CD8-positive, alpha-beta T cell (primary cell): ENCODE measurements at regions of chr19 and their contacts with region 1.

Region 1: DNA sequence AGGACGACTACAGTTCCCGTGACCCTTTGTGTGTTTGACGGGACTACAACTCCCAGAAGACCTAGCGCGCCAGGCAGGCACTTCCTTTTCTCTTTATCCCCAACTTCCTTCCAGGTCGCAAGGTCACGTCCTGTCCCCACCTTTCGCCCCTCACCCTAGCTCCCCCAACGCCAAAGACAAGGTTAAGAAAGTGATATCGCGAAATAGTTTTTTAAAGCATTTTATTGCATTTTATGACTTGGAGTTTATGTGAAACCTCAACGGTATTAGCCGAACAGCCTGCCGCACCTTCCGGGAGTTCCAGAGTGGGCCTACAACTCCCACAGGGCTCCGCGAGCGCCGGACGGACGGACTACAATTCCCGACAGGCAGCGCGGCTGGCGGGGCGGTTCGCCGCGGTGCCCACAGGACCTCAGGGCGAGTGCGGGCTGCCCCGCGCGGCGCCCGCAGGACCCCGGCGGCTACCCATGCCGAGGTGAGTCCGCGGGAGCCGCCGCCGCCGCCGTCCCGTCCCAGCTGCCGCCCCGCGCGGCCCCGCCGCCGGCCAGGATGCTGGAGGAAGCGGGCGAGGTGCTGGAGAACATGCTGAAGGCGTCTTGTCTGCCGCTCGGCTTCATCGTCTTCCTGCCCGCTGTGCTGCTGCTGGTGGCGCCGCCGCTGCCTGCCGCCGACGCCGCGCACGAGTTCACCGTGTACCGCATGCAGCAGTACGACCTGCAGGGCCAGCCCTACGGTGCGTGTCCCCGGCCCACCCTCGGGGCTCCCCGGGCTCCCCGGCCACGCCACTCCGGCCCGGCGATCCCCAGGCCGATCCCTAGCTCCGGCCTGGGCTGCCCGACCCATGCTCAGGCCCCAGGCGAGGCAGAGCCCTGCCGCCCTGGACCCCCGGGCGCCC is at the start of gene NCLN:
- DNase-seq: peak; percentile 91 to 98 (median 94)
- ATAC-seq: peak; percentile 84
- H3K4me3 ChIP-seq: peak within 1 kb of the TSS; percentile 66 to 76
- H3K4me3 Mint-ChIP-seq: peak within 1 kb of the TSS; percentile 92
- H3K27ac ChIP-seq: peak within 1 kb of the TSS; percentile 34 to 84
- H3K27ac Mint-ChIP-seq: peak within 1 kb of the TSS; percentile 89
- H3K4me1 ChIP-seq: peaks cover 67% of the 10 kb centered on the region
- H3K4me1 Mint-ChIP-seq: peaks cover 61% of the 10 kb centered on the region
- H3K27me3 ChIP-seq: no peaks in the 10 kb centered on the region
- H3K27me3 Mint-ChIP-seq: no peaks in the 10 kb centered on the region
- CTCF ChIP-seq: no peak
- total RNA-seq, gene NCLN: 47.3 to 55.7 TPM

Region 2: DNA sequence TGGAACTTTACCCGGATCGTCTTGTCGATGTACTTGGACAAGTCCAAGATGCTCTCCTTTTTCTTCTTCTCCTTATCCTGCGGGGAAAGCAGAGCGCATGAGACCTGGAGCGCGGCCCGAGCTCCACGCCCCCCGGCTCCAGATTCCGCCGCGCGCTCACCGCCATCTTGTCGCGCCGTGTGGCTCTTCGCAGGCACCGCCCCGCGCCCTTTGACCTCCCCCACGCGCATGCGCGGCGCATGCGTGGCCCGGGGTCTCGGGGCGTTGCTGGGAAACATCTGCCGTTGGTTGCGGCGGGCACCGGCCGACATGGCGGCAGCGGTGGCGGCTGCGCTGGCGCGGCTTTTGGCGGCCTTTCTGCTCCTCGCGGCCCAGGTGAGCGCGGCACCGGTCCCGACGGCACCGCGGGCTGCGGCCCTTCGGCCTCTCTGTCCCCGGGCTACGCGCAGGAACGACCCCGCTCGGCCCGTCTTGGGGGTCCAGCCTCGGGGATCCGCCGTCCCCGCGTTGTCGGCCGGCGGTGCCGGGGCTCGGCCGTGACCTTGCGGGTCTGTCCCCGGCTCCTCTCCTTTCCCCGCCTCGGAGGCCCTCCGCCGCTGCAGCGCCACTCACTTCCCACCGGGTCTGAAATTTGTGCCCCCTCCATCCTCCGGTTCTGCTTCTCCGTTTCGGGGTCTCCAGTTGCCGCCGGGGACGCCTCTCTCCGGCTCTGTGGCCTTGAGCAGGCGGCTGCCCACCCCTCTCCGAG is 857.2 kb before region 1 on chr19 and contains the starts of genes LSM7 and SPPL2B:
- CTCF ChIA-PET with region 1: no interaction called
- POLR2A ChIA-PET with region 1: no interaction called
- intact Hi-C with region 1: loop called in 1 of 2 experiments (anchors 5 kb)
- DNase-seq: peak; percentile 81 to 96 (median 93)
- ATAC-seq: peak; percentile 62
- H3K4me3 ChIP-seq: peak within 1 kb of the TSS; percentile 77 to 93
- H3K4me3 Mint-ChIP-seq: peak within 1 kb of the TSS; percentile 97
- H3K27ac ChIP-seq: peak within 1 kb of the TSS; percentile 71 to 82
- H3K27ac Mint-ChIP-seq: peak within 1 kb of the TSS; percentile 99
- H3K4me1 ChIP-seq: peaks cover 60% of the 10 kb centered on the region
- H3K4me1 Mint-ChIP-seq: peaks cover 62% of the 10 kb centered on the region
- H3K27me3 ChIP-seq: no peaks in the 10 kb centered on the region
- H3K27me3 Mint-ChIP-seq: no peaks in the 10 kb centered on the region
- CTCF ChIP-seq: no peak
- total RNA-seq, gene LSM7: 103 to 113 TPM
- total RNA-seq, gene SPPL2B: 123 to 126 TPM

Region 3: GRCh38 chr19:2950286-2951124 is 235.2 kb before region 1 on chr19:
- CTCF ChIA-PET with region 1: interaction called, 4 read pairs
- POLR2A ChIA-PET with region 1: interaction called, 3 read pairs
- intact Hi-C with region 1: loop called (anchors 1 kb)
- DNase-seq: peak; percentile 100
- ATAC-seq: peak; percentile 93
- H3K4me3 ChIP-seq: peak overlapping the region; percentile 77 to 80
- H3K4me3 Mint-ChIP-seq: peak overlapping the region; percentile 97
- H3K27ac ChIP-seq: peak overlapping the region; percentile 78 to 97
- H3K27ac Mint-ChIP-seq: peak overlapping the region; percentile 98
- H3K4me1 ChIP-seq: peaks cover 12% of the 10 kb centered on the region
- H3K4me1 Mint-ChIP-seq: peaks cover 32% of the 10 kb centered on the region
- H3K27me3 ChIP-seq: no peaks in the 10 kb centered on the region
- H3K27me3 Mint-ChIP-seq: no peaks in the 10 kb centered on the region
- CTCF ChIP-seq: no peak

Region 4: GRCh38 chr19:3275583-3276340 is 90.0 kb after region 1 on chr19:
- CTCF ChIA-PET with region 1: interaction called, 3 read pairs
- POLR2A ChIA-PET with region 1: no interaction called
- intact Hi-C with region 1: loop called in 1 of 2 experiments (anchors 1 kb)
- DNase-seq: peak; percentile 84 to 98 (median 93)
- ATAC-seq: peak; percentile 79
- H3K4me3 ChIP-seq: peak overlapping the region; percentile 59 to 84
- H3K4me3 Mint-ChIP-seq: peak overlapping the region; percentile 86
- H3K27ac ChIP-seq: peak overlapping the region; percentile 34 to 63
- H3K27ac Mint-ChIP-seq: peak overlapping the region; percentile 70
- H3K4me1 ChIP-seq: peaks cover 18% of the 10 kb centered on the region
- H3K4me1 Mint-ChIP-seq: peaks cover 17% of the 10 kb centered on the region
- H3K27me3 ChIP-seq: peaks cover 0 to 2% of the 10 kb centered on the region in 2 experiments
- H3K27me3 Mint-ChIP-seq: peaks cover 6% of the 10 kb centered on the region
- CTCF ChIP-seq: peak; percentile 14

Region 5: GRCh38 chr19:3505598-3506383 is 320.1 kb after region 1 on chr19 and contains the start of gene FZR1:
- CTCF ChIA-PET with region 1: no interaction called
- POLR2A ChIA-PET with region 1: no interaction called
- intact Hi-C with region 1: loop called (anchors 1 to 10 kb)
- DNase-seq: peak; percentile 99 to 100 (median 100)
- ATAC-seq: peak; percentile 85
- H3K4me3 ChIP-seq: peak within 1 kb of the TSS; percentile 76 to 83
- H3K4me3 Mint-ChIP-seq: peak within 1 kb of the TSS; percentile 85
- H3K27ac ChIP-seq: peak within 1 kb of the TSS; percentile 97
- H3K27ac Mint-ChIP-seq: peak within 1 kb of the TSS; percentile 97
- H3K4me1 ChIP-seq: peaks cover 36% of the 10 kb centered on the region
- H3K4me1 Mint-ChIP-seq: peaks cover 48% of the 10 kb centered on the region
- H3K27me3 ChIP-seq: no peaks in the 10 kb centered on the region
- H3K27me3 Mint-ChIP-seq: no peaks in the 10 kb centered on the region
- CTCF ChIP-seq: no peak
- total RNA-seq, gene FZR1: 130 to 142 TPM